ENCODE measurements at regions of chr10 and their contacts with region 1.

Region 1: DNA sequence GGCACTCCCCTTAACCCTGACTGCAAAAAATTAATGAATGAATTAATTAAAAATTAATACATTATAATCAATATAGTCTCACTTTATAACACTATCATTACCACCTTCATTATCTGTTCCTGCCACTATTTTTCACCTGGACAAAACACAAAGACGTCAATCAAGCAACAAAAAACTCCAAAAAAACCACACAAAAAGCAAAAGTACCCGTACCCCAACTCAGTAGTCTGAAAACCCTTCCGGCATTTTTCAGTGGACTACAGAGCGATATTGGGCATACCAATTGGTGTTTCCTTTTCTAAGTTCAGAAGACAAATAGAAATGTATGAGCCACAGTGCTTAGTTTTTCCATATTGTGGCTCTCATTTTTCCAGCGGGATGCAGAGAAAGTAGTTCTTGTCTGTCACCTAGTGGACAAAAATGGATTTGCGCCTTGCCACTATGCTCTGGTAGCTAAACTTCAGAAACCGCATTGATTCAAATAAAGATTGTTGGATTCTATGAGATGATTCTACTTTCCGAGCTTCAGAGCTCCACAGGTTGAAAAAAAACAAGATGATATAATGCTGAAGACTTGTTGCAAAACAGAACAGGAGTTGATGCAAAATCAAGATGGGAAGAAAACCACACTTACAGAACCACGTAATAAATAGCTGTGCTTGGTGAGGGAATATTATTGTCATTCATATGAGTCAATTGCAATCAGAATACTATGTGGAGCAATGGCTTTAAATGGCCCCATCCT is 50.6 kb upstream of the ITGB1 start:
- DNase-seq: peak; percentile 52
- CTCF ChIP-seq: peak; percentile 94

Region 2: GRCh38 chr10:32746869-32747268 is 261.8 kb before region 1 on chr10:
- CTCF ChIA-PET with region 1: no interaction called
- POLR2A ChIA-PET with region 1: no interaction called
- DNase-seq: no peak
- CTCF ChIP-seq: no peak

Region 3: GRCh38 chr10:32790483-32790882 is 218.2 kb before region 1 on chr10:
- CTCF ChIA-PET with region 1: interaction called, 19 read pairs
- POLR2A ChIA-PET with region 1: no interaction called
- DNase-seq: no peak
- CTCF ChIP-seq: no peak

Region 4: GRCh38 chr10:32795598-32796183 is 213.0 kb before region 1 on chr10:
- CTCF ChIA-PET with region 1: interaction called, 23 read pairs
- POLR2A ChIA-PET with region 1: no interaction called
- DNase-seq: peak; percentile 18
- CTCF ChIP-seq: peak; percentile 60

Region 5: DNA sequence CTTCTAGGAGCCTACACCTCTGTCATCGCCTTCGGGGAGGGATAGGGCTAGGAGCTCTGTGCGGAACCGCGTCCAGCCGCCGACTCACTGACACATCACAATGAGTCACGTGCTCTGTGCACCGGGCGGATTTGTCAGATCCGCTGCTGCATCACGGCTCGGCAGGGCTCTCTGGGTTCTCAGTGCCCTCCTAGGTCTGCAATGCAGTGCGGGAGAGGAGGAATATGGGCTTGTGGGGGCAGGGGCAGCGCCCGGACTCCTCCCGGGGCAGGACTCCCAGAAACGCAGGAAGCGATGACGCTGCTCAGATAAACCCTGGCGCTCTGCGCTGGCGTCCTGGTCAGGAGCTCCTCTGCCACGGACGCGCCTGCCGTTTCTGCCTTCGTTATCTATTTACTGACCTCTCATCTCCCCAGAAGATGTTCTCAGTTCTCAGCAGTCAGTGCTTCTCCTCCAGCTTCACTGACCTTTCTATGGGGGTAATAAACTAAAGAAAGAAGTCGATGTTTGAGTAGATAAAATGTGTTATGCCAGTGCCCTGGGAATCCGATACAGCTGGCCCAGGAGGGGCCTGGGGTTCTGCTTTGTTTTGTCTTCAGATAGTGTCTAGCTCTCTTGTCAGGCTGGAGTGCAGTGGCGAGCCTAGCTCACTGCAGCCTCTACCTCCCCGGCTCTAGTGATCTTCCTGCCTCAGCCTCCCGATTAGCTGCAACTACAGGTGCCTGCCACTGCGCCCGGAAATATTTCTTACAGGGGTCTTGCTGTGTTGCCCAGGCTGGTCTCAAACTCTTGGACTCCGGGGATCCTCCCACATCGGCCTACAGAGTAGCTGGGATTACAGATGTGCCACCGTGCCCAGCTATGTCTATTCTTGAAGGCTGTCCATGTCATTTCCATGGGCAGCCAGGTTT is 27.9 kb before region 1 on chr10:
- CTCF ChIA-PET with region 1: interaction called, 12 read pairs
- POLR2A ChIA-PET with region 1: no interaction called
- DNase-seq: peak; percentile 66
- CTCF ChIP-seq: no peak

Region 6: GRCh38 chr10:32995751-32996150 is 12.9 kb before region 1 on chr10:
- CTCF ChIA-PET with region 1: interaction called, 11 read pairs
- POLR2A ChIA-PET with region 1: no interaction called
- DNase-seq: no peak
- CTCF ChIP-seq: no peak

Region 7: GRCh38 chr10:33125522-33126517 is 117.1 kb after region 1 on chr10:
- CTCF ChIA-PET with region 1: no interaction called
- POLR2A ChIA-PET with region 1: no interaction called
- DNase-seq: no peak
- CTCF ChIP-seq: no peak